ENCODE measurements at regions of chr1 and their contacts with region 1.

Region 1: GRCh38 chr1:150444232-150444631 is 43.0 kb upstream of the TARS2 start:
- DNase-seq: no peak
- ATAC-seq: no peak
- H3K4me3 ChIP-seq: no peak overlapping the region
- H3K27ac ChIP-seq: no peak overlapping the region
- H3K4me1 ChIP-seq: no peaks in the 10 kb centered on the region
- H3K27me3 ChIP-seq: no peaks in the 10 kb centered on the region
- CTCF ChIP-seq: no peak

Region 2: DNA sequence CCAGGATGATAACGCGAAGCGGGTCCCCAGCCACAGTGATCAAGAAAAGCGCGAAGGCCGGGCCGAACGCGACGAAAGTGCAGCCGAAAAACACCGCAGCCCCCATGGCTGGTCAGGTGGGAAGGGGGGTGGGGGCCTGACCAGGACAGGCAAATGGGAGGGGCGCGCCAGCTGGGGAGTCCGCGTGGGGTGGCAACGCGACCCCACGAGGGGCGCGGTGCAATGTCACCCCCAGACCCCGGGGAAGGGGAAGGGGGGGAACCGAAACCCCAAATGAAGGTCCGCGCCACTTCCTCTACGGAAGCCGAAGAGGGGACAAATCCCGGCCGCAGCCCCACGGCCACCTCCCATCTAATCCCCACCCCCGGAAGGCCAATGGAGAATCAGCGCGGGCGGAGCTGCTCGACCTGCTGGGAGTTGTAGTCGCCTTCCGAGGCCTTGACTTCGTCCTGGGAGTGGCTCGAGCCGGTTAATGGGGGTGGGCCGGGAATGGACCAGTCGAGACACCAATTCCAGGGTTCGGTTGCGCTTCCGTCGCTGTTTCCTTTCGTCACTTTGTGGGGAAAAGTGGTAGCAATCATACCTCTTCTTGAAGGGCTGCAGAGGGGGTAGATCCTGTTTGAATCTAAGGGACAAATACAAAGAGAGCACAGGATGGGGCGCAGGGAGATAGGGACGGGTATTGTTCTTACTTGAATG is 175.4 kb before region 1 on chr1 and contains the start of gene APH1A:
- intact Hi-C with region 1: no loop called
- DNase-seq: peak; percentile 96 to 98
- ATAC-seq: peak; percentile 98 to 99 (median 98)
- H3K4me3 ChIP-seq: peak within 1 kb of the TSS; percentile 92
- H3K27ac ChIP-seq: peak within 1 kb of the TSS; percentile 92
- H3K4me1 ChIP-seq: peaks cover 11% of the 10 kb centered on the region
- H3K27me3 ChIP-seq: no peaks in the 10 kb centered on the region
- CTCF ChIP-seq: no peak
- total RNA-seq, gene APH1A: 33.1 to 69.3 (median 51.1) TPM

Region 3: GRCh38 chr1:151267760-151268159 is 823.5 kb after region 1 on chr1:
- intact Hi-C with region 1: loop called in 1 of 2 experiments (anchors 5 kb)
- DNase-seq: no peak
- ATAC-seq: no peak
- H3K4me3 ChIP-seq: no peak overlapping the region
- H3K27ac ChIP-seq: no peak overlapping the region
- H3K4me1 ChIP-seq: no peaks in the 10 kb centered on the region
- H3K27me3 ChIP-seq: no peaks in the 10 kb centered on the region
- CTCF ChIP-seq: no peak

Measured in psoas muscle (tissue), 8 donors.